ENCODE measurements at regions of chr7 and their contacts with region 1.

Region 1: GRCh38 chr7:4797858-4798705 is 22.7 kb downstream of the AP5Z1 start:
- DNase-seq: peak; percentile 63 to 73
- ATAC-seq: peak; percentile 51 to 85
- H3K4me3 ChIP-seq: no peak overlapping the region
- H3K27ac ChIP-seq: peak overlapping the region in 1 of 2 experiments; percentile 39; a peak in 1 of 6 replicates
- H3K4me1 ChIP-seq: no peaks in the 10 kb centered on the region
- CTCF ChIP-seq: peak; percentile 96
- EP300 ChIP-seq: no peak
- POLR2A ChIP-seq: no peak
- RAD21 ChIP-seq: peak; percentile 75 to 83

Region 2: GRCh38 chr7:3605222-3605621 is 1192.9 kb before region 1 on chr7:
- CTCF ChIA-PET with region 1: no interaction called
- POLR2A ChIA-PET with region 1: no interaction called
- DNase-seq: no peak
- ATAC-seq: no peak
- H3K4me3 ChIP-seq: no peak overlapping the region
- H3K27ac ChIP-seq: no peak overlapping the region
- H3K4me1 ChIP-seq: no peaks in the 10 kb centered on the region
- CTCF ChIP-seq: no peak
- EP300 ChIP-seq: no peak
- POLR2A ChIP-seq: no peak
- RAD21 ChIP-seq: no peak

Region 3: GRCh38 chr7:4783762-4784351 is 14.2 kb before region 1 on chr7:
- CTCF ChIA-PET with region 1: interaction called, 28 read pairs
- POLR2A ChIA-PET with region 1: no interaction called
- DNase-seq: no peak
- ATAC-seq: no peak
- H3K4me3 ChIP-seq: no peak overlapping the region
- H3K27ac ChIP-seq: no peak overlapping the region
- H3K4me1 ChIP-seq: no peaks in the 10 kb centered on the region
- CTCF ChIP-seq: no peak
- EP300 ChIP-seq: no peak
- POLR2A ChIP-seq: no peak
- RAD21 ChIP-seq: no peak

Region 4: GRCh38 chr7:4809091-4809591 is 11.1 kb after region 1 on chr7:
- CTCF ChIA-PET with region 1: interaction called, 15 read pairs
- POLR2A ChIA-PET with region 1: no interaction called
- DNase-seq: no peak
- ATAC-seq: no peak
- H3K4me3 ChIP-seq: no peak overlapping the region
- H3K27ac ChIP-seq: no peak overlapping the region
- H3K4me1 ChIP-seq: no peaks in the 10 kb centered on the region
- CTCF ChIP-seq: no peak
- EP300 ChIP-seq: no peak
- POLR2A ChIP-seq: no peak
- RAD21 ChIP-seq: no peak

Region 5: GRCh38 chr7:5041047-5041446 is 243.0 kb after region 1 on chr7:
- CTCF ChIA-PET with region 1: no interaction called
- POLR2A ChIA-PET with region 1: no interaction called
- DNase-seq: no peak
- ATAC-seq: no peak
- H3K4me3 ChIP-seq: no peak overlapping the region
- H3K27ac ChIP-seq: no peak overlapping the region
- H3K4me1 ChIP-seq: no peaks in the 10 kb centered on the region
- CTCF ChIP-seq: no peak
- EP300 ChIP-seq: no peak
- POLR2A ChIP-seq: no peak
- RAD21 ChIP-seq: no peak

Region 6: GRCh38 chr7:5086256-5086655 is 288.2 kb after region 1 on chr7:
- CTCF ChIA-PET with region 1: interaction called, 58 read pairs
- POLR2A ChIA-PET with region 1: no interaction called
- DNase-seq: no peak
- ATAC-seq: peak in 1 of 2 experiments; percentile 35; a peak in 3 of 6 replicates
- H3K4me3 ChIP-seq: no peak overlapping the region
- H3K27ac ChIP-seq: no peak overlapping the region
- H3K4me1 ChIP-seq: no peaks in the 10 kb centered on the region
- CTCF ChIP-seq: no peak
- EP300 ChIP-seq: no peak
- POLR2A ChIP-seq: no peak
- RAD21 ChIP-seq: no peak

Region 7: GRCh38 chr7:5172196-5172775 is 374.2 kb after region 1 on chr7:
- CTCF ChIA-PET with region 1: interaction called, 20 read pairs
- POLR2A ChIA-PET with region 1: no interaction called
- DNase-seq: no peak
- ATAC-seq: no peak
- H3K4me3 ChIP-seq: no peak overlapping the region
- H3K27ac ChIP-seq: no peak overlapping the region
- H3K4me1 ChIP-seq: no peaks in the 10 kb centered on the region
- CTCF ChIP-seq: no peak
- EP300 ChIP-seq: no peak
- POLR2A ChIP-seq: no peak
- RAD21 ChIP-seq: no peak

Measured in A549 (cell line).